ENCODE measurements at regions of chr13 and their contacts with region 1.

Region 1: DNA sequence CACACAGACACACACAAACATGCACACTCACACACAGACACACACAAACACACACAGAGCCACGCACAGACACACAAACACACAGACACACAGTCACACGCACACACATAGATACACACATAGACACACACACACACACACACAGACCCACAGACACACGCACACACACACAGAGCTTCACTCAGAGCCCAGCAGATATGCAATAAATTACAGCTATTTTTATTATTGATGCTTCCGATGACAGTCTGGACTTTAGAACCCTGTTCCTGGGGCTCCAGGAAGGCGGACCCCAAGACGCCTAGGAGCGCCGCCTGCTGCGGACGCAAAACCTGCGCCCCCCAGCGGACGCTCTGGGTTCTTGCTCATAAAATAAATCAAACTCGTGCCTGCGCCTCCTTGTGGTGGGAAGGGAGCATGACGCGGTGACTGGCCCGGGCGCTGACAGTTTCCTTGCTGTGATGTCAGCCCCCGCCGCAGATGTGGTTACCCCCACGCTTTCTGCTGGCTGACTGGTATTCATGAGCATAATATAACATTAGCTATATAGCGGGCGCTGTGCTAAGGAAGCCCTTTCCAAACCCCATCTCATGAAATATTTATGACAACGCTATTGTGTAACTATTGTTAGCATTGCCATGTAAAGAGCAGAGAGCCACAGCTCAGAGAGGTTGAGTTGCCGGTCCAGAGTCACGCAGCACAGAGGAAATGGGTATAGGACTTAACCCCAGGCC is 64.4 kb upstream of the TM9SF2 start:
- DNase-seq: peak; percentile 88 to 97 (median 94)
- ATAC-seq: peak; percentile 49 to 72 (median 68)
- H3K4me3 ChIP-seq: peak overlapping the region in 1 of 2 donors; percentile 34
- H3K4me3 Mint-ChIP-seq: peak overlapping the region; percentile 1 to 54 (median 50)
- H3K27ac ChIP-seq: peak overlapping the region; percentile 0
- H3K27ac Mint-ChIP-seq: peak overlapping the region; percentile 83 to 95
- H3K4me1 ChIP-seq: peaks cover 46 to 52% of the 10 kb centered on the region in 2 experiments
- H3K4me1 Mint-ChIP-seq: peaks cover 57 to 58% (median 58%) of the 10 kb centered on the region in 3 donors
- H3K27me3 ChIP-seq: peaks cover 0 to 5% of the 10 kb centered on the region in 2 experiments
- H3K27me3 Mint-ChIP-seq: no peaks in the 10 kb centered on the region

Region 2: GRCh38 chr13:99258210-99258860 is 178.5 kb before region 1 on chr13 and contains the start of gene GPR18:
- CTCF ChIA-PET with region 1: interaction called, 4 to 10 read pairs
- POLR2A ChIA-PET with region 1: interaction called in 1 of 2 experiments, 5 read pairs
- DNase-seq: peak in 23 of 35 experiments; percentile 15 to 74 (median 35)
- ATAC-seq: peak; percentile 81 to 92 (median 86)
- H3K4me3 ChIP-seq: peak within 1 kb of the TSS; percentile 54 to 76
- H3K4me3 Mint-ChIP-seq: peak within 1 kb of the TSS; percentile 89 to 93 (median 90)
- H3K27ac ChIP-seq: peak within 1 kb of the TSS; percentile 85
- H3K27ac Mint-ChIP-seq: peak within 1 kb of the TSS; percentile 92 to 93
- H3K4me1 ChIP-seq: peaks cover 30 to 53% of the 10 kb centered on the region in 2 experiments
- H3K4me1 Mint-ChIP-seq: peaks cover 65 to 82% (median 74%) of the 10 kb centered on the region in 3 donors
- H3K27me3 ChIP-seq: no peaks in the 10 kb centered on the region
- H3K27me3 Mint-ChIP-seq: no peaks in the 10 kb centered on the region
- total RNA-seq, gene GPR18: 15.2 to 26.7 (median 16.7) TPM

Region 3: DNA sequence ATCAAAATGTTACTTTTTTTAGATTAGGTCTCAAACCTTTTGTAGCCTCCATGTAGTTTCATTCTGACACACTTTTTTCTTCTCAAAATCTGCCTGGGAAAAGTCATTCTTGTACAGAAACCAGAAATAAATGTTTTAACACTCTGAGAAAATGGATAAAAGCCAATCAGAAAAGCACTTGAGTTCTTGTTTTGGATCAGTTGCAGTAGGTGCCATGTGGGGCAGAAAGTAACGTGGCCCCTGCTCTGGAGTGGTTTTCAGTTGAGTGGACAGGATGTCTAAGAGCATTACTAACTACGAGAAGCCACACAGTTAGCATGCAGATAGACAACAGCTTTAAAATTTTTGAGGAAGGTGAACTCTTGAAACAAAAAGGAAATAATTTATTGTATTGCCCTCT is 148.8 kb before region 1 on chr13:
- CTCF ChIA-PET with region 1: interaction called, 3 to 11 read pairs
- POLR2A ChIA-PET with region 1: interaction called in 1 of 2 experiments, 3 read pairs
- DNase-seq: peak in 1 of 35 experiments; percentile 36
- ATAC-seq: no peak
- H3K4me3 ChIP-seq: no peak overlapping the region
- H3K4me3 Mint-ChIP-seq: peak overlapping the region in 1 of 3 donors; percentile 20
- H3K27ac ChIP-seq: peak overlapping the region; percentile 52
- H3K27ac Mint-ChIP-seq: peak overlapping the region; percentile 89
- H3K4me1 ChIP-seq: peaks cover 26 to 67% of the 10 kb centered on the region in 2 experiments
- H3K4me1 Mint-ChIP-seq: peaks cover 90 to 97% (median 90%) of the 10 kb centered on the region in 3 donors
- H3K27me3 ChIP-seq: no peaks in the 10 kb centered on the region
- H3K27me3 Mint-ChIP-seq: no peaks in the 10 kb centered on the region

Region 4: DNA sequence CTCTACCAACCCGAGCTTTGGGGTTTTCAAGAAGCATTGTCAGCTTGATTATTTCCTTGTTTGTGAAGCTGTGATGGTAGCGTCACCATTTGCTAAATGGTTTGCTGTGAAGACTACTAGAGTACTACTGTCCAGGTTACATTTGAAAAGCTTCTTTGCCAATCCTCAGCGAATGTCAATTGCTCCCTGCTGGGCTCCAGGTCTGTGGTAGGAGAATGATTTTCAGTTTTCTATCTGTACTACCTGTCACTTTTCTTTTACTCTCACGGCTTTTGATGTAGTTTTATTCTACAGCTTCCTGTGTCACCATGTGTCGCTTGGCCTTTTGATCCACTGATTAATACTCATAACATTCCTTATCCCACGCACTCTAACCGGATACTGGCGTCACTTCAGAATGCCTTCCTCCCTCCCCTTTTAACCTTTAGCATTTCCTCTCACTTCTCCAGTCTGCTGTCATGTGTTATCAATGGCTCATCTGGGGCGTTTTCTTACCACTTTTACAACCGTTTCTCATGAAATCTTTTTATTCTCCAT is 122.1 kb before region 1 on chr13:
- CTCF ChIA-PET with region 1: interaction called in 1 of 2 experiments, 11 read pairs
- POLR2A ChIA-PET with region 1: no interaction called
- DNase-seq: peak in 32 of 35 experiments; percentile 19 to 84 (median 58)
- ATAC-seq: peak; percentile 68 to 86 (median 76)
- H3K4me3 ChIP-seq: peak overlapping the region; percentile 35 to 49
- H3K4me3 Mint-ChIP-seq: peak overlapping the region; percentile 60 to 76 (median 69)
- H3K27ac ChIP-seq: peak overlapping the region; percentile 91
- H3K27ac Mint-ChIP-seq: peak overlapping the region; percentile 95 to 96
- H3K4me1 ChIP-seq: peaks cover 54 to 61% of the 10 kb centered on the region in 2 experiments
- H3K4me1 Mint-ChIP-seq: peaks cover 78 to 85% (median 82%) of the 10 kb centered on the region in 3 donors
- H3K27me3 ChIP-seq: no peaks in the 10 kb centered on the region
- H3K27me3 Mint-ChIP-seq: no peaks in the 10 kb centered on the region

Region 5: GRCh38 chr13:99374994-99375737 is 61.7 kb before region 1 on chr13:
- CTCF ChIA-PET with region 1: interaction called, 4 to 8 read pairs
- POLR2A ChIA-PET with region 1: interaction called in 1 of 2 experiments, 18 read pairs
- DNase-seq: peak in 34 of 35 experiments; percentile 50 to 93 (median 84)
- ATAC-seq: peak; percentile 64 to 92 (median 70)
- H3K4me3 ChIP-seq: no peak overlapping the region
- H3K4me3 Mint-ChIP-seq: peak overlapping the region; percentile 49 to 72 (median 51)
- H3K27ac ChIP-seq: peak overlapping the region; percentile 88
- H3K27ac Mint-ChIP-seq: peak overlapping the region; percentile 98 to 100
- H3K4me1 ChIP-seq: peaks cover 68 to 69% of the 10 kb centered on the region in 2 experiments
- H3K4me1 Mint-ChIP-seq: peaks cover 87 to 94% (median 94%) of the 10 kb centered on the region in 3 donors
- H3K27me3 ChIP-seq: no peaks in the 10 kb centered on the region
- H3K27me3 Mint-ChIP-seq: no peaks in the 10 kb centered on the region

Region 6: GRCh38 chr13:99386911-99387788 is 49.7 kb before region 1 on chr13:
- CTCF ChIA-PET with region 1: interaction called, 55 read pairs
- POLR2A ChIA-PET with region 1: interaction called in 1 of 2 experiments, 4 read pairs
- DNase-seq: peak; percentile 68 to 93 (median 85)
- ATAC-seq: peak; percentile 36 to 54 (median 42)
- H3K4me3 ChIP-seq: no peak overlapping the region
- H3K4me3 Mint-ChIP-seq: peak overlapping the region in 1 of 3 donors; percentile 46
- H3K27ac ChIP-seq: peak overlapping the region; percentile 81
- H3K27ac Mint-ChIP-seq: peak overlapping the region; percentile 98
- H3K4me1 ChIP-seq: peaks cover 53 to 76% of the 10 kb centered on the region in 2 experiments
- H3K4me1 Mint-ChIP-seq: peaks cover 65 to 73% (median 73%) of the 10 kb centered on the region in 3 donors
- H3K27me3 ChIP-seq: no peaks in the 10 kb centered on the region
- H3K27me3 Mint-ChIP-seq: no peaks in the 10 kb centered on the region

Region 7: DNA sequence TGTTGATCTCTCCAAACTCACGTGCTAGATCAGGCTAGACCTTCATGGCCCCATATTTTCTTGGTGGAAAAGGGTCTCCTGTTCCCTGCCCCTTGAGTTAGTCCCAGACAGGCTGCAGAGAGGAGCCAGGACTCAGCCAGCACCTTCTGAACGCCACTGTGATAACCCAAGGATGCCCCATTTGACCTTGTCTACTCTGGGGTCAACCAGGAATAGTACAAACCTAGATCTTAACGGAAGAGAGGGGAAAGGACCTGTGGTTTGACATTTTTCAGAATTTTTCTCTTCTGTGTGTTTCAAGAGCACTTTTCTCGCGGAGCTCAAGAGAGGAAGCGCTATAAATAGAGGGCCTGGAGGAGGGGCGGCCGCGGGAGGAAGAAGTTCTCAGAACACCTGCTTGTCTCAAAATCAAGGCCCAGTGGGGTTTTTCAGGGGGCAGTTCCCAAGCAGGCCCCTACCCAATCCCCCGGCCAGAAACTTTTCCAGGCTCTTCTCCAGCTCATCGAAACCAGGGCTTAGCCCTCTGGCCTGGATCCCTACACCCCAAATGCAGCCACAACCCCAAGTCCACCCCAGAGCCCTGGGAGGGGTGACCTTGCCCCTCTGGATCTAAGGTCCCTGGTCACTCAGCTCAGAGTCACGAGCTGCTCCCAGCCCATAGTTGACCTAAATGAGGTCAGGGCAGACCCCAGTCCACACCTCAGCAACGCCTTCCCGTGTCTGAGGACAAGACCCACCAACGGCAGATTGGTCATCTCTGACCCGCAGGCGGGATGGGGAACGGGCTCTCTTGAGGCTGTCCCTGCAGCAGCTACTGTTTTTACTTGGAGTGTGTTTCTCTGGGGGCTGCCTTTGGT is 11.1 kb before region 1 on chr13:
- CTCF ChIA-PET with region 1: interaction called, 13 to 18 read pairs
- POLR2A ChIA-PET with region 1: interaction called, 3 to 6 read pairs
- DNase-seq: peak in 22 of 35 experiments; percentile 27 to 67 (median 56)
- ATAC-seq: peak; percentile 71 to 81 (median 74)
- H3K4me3 ChIP-seq: peak overlapping the region in 1 of 2 donors; percentile 6
- H3K4me3 Mint-ChIP-seq: peak overlapping the region; percentile 26 to 80 (median 61)
- H3K27ac ChIP-seq: peak overlapping the region; percentile 90
- H3K27ac Mint-ChIP-seq: peak overlapping the region; percentile 85 to 91
- H3K4me1 ChIP-seq: peaks cover 41 to 63% of the 10 kb centered on the region in 2 experiments
- H3K4me1 Mint-ChIP-seq: peaks cover 61 to 65% (median 63%) of the 10 kb centered on the region in 3 donors
- H3K27me3 ChIP-seq: no peaks in the 10 kb centered on the region
- H3K27me3 Mint-ChIP-seq: no peaks in the 10 kb centered on the region